B cell (primary cell): ENCODE measurements at regions of chr9 and their contacts with region 1.

Region 1: DNA sequence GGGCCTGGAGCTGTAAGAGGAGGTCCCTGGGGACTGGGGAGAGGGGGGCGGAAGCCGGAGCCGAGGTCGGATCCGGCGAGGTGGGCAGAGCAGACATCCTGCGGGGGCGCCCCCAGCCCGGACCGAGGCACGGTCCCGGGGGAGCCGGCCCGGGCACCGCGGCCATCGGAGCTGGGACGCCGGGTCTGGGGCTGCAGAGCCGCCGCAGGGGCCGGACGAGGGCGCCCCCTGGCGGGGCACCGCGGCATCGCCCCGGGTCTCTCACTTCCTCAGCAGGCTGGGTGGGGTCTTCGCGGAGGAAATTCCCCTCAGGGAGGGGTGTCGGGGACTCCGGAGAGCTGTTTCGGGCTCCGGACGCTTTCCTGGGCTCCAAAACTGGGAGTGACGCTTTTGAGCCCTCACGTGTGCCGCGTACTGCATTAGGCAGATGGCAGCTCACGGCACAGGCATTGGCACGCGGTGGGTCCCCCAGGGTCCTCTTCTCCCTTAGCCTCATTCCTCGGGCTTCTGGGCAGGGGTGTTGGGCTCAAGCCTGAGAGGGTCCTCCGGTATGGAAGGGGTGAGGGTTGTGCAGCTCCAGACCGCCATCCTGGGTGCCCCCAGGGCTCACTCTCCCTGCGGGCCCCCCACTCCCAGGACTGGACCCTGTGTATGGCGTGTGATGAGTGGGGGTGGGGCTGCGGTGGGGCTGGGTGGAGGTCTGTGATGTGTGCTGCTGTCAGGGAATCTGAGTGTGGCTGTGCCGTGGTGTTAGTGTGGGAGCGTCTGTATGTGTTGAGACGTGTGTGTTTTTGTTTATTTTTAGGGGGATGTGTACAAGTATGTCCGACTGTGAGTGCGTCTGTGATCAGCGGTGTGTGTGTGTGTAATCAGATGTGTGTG is 29.6 kb downstream of the LHX2 start:
- DNase-seq: peak; percentile 67
- ATAC-seq: peak; percentile 63
- H3K4me3 ChIP-seq: peak overlapping the region in 4 of 5 experiments; percentile 24 to 60 (median 44)
- H3K4me3 Mint-ChIP-seq: peak overlapping the region; percentile 81
- H3K27ac ChIP-seq: no peak overlapping the region
- H3K27ac Mint-ChIP-seq: no peak overlapping the region
- H3K4me1 ChIP-seq: peaks cover 21 to 24% of the 10 kb centered on the region in 2 donors
- H3K4me1 Mint-ChIP-seq: peaks cover 26% of the 10 kb centered on the region
- H3K27me3 ChIP-seq: peaks cover 0 to 60% (median 29%) of the 10 kb centered on the region in 4 experiments
- H3K27me3 Mint-ChIP-seq: peaks cover 42% of the 10 kb centered on the region
- CTCF ChIP-seq: peak; percentile 92

Region 2: DNA sequence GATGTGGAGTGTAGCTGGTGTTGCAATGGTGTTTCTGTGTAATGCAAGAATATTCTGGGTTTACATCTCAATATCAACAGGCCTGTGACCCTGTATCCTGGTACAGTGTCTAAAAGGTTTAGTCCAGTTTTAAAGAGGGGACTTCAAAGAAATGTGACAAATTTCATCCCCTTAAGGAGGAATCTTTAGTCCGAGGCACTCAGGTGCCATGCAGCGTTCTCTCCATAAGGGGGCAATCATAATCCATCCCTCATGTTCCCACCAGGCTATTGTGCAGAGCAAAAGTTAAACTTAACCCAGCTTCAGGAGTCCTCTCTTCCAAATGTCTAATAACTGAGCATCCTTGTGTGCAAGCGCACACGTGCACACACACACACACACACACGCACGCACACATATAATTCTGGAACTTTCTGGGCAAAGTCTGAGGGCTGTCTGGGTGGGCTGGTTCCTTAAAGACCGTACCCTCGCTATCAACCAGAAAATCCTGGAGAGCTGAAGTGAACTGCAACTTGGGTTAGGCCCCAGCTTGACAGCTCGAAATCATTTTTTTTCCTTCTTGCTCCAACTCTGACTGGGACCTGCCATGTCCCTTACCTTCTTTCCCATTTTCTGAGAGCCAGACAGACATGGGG is 639.2 kb before region 1 on chr9:
- CTCF ChIA-PET with region 1: no interaction called
- POLR2A ChIA-PET with region 1: no interaction called
- intact Hi-C with region 1: loop called (anchors 2 kb)
- DNase-seq: no peak
- ATAC-seq: no peak
- H3K4me3 ChIP-seq: no peak overlapping the region
- H3K4me3 Mint-ChIP-seq: no peak overlapping the region
- H3K27ac ChIP-seq: no peak overlapping the region
- H3K27ac Mint-ChIP-seq: no peak overlapping the region
- H3K4me1 ChIP-seq: no peaks in the 10 kb centered on the region
- H3K4me1 Mint-ChIP-seq: no peaks in the 10 kb centered on the region
- H3K27me3 ChIP-seq: no peaks in the 10 kb centered on the region
- H3K27me3 Mint-ChIP-seq: no peaks in the 10 kb centered on the region
- CTCF ChIP-seq: peak; percentile 30